ENCODE measurements at regions of chr1 and their contacts with region 1.

Region 1: DNA sequence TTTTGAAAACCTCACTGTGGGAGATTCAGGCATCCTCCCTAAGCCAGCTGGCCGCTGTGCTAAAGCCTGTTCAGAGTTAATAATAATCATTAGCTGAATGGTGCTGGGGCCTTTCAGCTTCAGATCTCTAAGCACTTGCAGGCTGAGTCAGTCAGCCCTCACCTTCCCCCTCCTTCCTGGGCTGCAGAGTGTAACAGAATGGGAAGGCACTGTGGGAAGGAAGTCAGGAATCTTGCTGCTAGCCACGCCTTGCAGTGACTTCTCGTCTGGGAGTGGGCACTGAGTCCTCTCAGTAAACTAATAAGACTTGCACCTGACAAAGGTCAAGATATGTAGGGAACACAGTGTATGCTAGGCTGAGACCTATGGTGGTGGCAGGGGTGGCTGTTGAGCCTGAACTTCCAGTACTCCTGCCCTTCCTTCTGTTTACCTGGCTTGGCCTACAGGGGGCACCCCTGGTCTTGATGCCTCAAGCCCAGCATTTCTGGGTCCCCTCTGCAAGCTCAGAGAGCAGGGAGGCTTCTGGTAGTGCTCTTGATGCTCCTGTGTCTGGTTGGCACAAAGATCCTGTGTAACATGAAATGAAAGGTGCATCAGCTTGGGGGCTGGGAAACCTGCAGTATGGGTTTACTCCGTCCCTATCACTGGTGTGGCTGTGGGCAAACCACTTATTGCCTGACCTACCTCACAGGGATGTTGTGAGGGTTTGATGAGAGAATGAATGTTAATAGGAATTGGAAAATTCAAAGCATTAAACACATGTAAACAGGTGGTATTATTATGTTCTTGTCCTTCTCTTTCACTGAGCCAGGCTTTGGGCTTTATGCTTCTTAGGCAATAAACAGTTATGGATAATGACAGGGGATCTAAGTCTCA is 6.0 kb downstream of the CYB561D1 start:
- DNase-seq: peak; percentile 70
- H3K4me3 Mint-ChIP-seq: no peak overlapping the region
- H3K27ac Mint-ChIP-seq: peak overlapping the region; percentile 38
- H3K4me1 Mint-ChIP-seq: peaks cover 88% of the 10 kb centered on the region
- H3K27me3 Mint-ChIP-seq: no peaks in the 10 kb centered on the region

Region 2: GRCh38 chr1:109454497-109455133 is 45.3 kb before region 1 on chr1:
- CTCF ChIA-PET with region 1: no interaction called
- POLR2A ChIA-PET with region 1: no interaction called
- intact Hi-C with region 1: no loop called
- DNase-seq: no peak
- H3K4me3 Mint-ChIP-seq: no peak overlapping the region
- H3K27ac Mint-ChIP-seq: no peak overlapping the region
- H3K4me1 Mint-ChIP-seq: no peaks in the 10 kb centered on the region
- H3K27me3 Mint-ChIP-seq: peaks cover 27% of the 10 kb centered on the region

Region 3: DNA sequence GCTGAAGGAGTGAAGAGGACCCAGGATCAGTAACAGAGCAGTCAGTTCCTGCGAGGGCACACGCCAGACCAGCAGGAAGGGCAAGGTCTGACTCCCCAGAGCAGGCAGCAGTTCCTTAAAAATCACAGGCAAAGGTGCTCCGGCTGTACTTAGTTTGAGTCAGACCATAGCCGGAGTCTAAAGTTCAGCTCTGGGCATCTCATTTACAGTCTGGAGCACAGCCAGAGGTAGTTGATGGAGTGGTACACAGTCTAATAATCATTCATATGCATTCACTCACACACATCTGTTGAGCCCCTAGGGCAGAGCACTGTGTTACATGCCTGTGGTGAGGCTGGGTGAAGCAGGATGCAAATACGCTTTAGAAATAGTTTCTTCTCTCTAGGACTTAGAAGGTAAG is 17.0 kb after region 1 on chr1:
- CTCF ChIA-PET with region 1: interaction called, 1,096 read pairs
- POLR2A ChIA-PET with region 1: no interaction called
- intact Hi-C with region 1: no loop called
- DNase-seq: no peak
- H3K4me3 Mint-ChIP-seq: no peak overlapping the region
- H3K27ac Mint-ChIP-seq: no peak overlapping the region
- H3K4me1 Mint-ChIP-seq: no peaks in the 10 kb centered on the region
- H3K27me3 Mint-ChIP-seq: no peaks in the 10 kb centered on the region

Measured in activated CD4-positive, alpha-beta memory T cell treated with anti-CD3 and anti-CD28 coated beads for 36 hours (primary cell).